ENCODE measurements at regions of chr11 and their contacts with region 1.

Region 1: GRCh38 chr11:91248199-91248807 is 976.3 kb upstream of the FAT3 start:
- DNase-seq: peak; percentile 78
- H3K4me3 ChIP-seq: no peak overlapping the region
- H3K27ac ChIP-seq: no peak overlapping the region
- H3K4me1 ChIP-seq: peaks cover 10% of the 10 kb centered on the region
- H3K27me3 ChIP-seq: no peaks in the 10 kb centered on the region
- CTCF ChIP-seq: peak; percentile 93

Region 2: DNA sequence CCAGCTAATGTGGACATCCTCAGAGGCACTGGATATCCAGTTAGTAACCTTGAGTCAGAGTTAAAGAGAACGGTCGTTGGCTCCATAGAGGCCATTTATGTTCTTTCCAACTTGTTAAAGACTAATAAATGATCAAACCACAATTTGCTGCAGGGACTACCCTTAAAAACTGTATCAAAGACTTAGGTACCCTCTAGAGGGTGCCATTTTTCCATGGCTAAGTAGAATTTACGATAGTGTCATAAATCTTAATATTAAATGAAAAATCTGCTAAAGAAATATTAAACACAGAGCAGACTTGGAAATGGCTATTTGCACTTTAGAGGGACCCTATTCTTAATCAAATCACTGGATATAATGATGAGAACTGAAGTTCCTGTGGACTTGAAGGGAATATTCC is 340.2 kb before region 1 on chr11:
- CTCF ChIA-PET with region 1: no interaction called
- POLR2A ChIA-PET with region 1: no interaction called
- intact Hi-C with region 1: loop called (anchors 10 kb)
- DNase-seq: peak; percentile 26
- H3K4me3 ChIP-seq: no peak overlapping the region
- H3K27ac ChIP-seq: no peak overlapping the region
- H3K4me1 ChIP-seq: peaks cover 5% of the 10 kb centered on the region
- H3K27me3 ChIP-seq: no peaks in the 10 kb centered on the region
- CTCF ChIP-seq: peak; percentile 53

Region 3: GRCh38 chr11:90947930-90948329 is 300.4 kb before region 1 on chr11:
- CTCF ChIA-PET with region 1: no interaction called
- POLR2A ChIA-PET with region 1: no interaction called
- intact Hi-C with region 1: loop called (anchors 5 kb)
- DNase-seq: peak; percentile 56
- H3K4me3 ChIP-seq: no peak overlapping the region
- H3K27ac ChIP-seq: no peak overlapping the region
- H3K4me1 ChIP-seq: no peaks in the 10 kb centered on the region
- H3K27me3 ChIP-seq: no peaks in the 10 kb centered on the region
- CTCF ChIP-seq: peak; percentile 55

Region 4: GRCh38 chr11:91041626-91042025 is 206.7 kb before region 1 on chr11:
- CTCF ChIA-PET with region 1: no interaction called
- POLR2A ChIA-PET with region 1: no interaction called
- intact Hi-C with region 1: loop called (anchors 2 kb)
- DNase-seq: peak; percentile 31
- H3K4me3 ChIP-seq: no peak overlapping the region
- H3K27ac ChIP-seq: no peak overlapping the region
- H3K4me1 ChIP-seq: peaks cover 2% of the 10 kb centered on the region
- H3K27me3 ChIP-seq: no peaks in the 10 kb centered on the region
- CTCF ChIP-seq: peak; percentile 56; the same call in 1 of the 2 replicates